SK-N-SH (cell line): ENCODE measurements at regions of chr1 and their contacts with region 1.

Region 1: DNA sequence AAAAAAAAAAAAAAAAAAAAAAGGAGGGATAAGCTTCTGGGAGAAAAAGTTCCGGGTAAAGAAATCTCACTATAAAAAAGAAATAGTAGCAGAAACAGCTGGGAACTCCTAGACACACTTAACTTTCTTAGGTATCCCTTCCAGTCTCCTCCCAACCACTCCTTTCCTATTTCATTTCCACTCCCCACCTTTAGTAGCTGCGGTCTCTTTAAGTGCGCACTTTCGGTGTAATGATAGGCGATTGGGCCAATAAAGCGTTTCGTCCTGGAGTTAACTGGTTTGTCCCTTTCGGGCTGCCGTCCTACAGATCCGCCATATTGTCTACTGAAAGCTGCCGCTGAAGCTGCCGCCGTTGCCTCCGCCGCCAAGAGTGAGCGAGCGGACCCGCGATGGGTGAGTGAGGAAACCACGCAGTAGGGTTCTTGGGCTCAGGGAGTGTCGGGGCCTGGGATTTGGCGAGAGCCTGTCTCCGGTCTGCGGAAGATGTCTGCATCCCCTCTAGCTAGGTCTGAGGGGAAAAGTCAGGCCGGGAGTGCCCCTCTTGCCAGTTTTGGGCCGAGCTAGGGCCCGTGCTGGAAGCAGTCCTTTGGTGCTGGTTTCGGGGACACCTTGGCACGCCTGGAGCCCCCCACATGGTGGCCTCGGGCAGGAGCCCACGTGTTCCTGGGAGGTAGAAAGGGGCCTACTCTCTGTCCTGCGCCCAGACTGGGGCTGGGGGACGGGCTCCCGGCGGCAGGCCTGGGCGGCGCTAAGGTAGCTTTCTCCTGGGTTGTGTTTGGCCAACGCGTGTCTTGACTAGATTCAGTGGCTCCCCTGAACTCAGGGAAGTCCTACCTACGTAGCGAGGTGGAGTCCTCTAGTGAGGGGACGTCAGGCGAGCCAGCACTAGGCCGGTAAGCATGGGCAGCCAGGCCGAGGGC is at the start of gene KPNA6:
- DNase-seq: peak; percentile 82
- H3K4me3 ChIP-seq: peak within 1 kb of the TSS; percentile 79 to 98
- H3K27ac ChIP-seq: peak within 1 kb of the TSS; percentile 83 to 89
- H3K4me1 ChIP-seq: peaks cover 0 to 6% of the 10 kb centered on the region in 2 experiments; a peak in 1 of 4 replicates
- H3K27me3 ChIP-seq: no peaks in the 10 kb centered on the region
- CTCF ChIP-seq: no peak
- EP300 ChIP-seq: peak in 1 of 2 experiments; percentile 26; a peak in 1 of 4 replicates
- RAD21 ChIP-seq: no peak
- polyA plus RNA-seq, gene KPNA6: 13.1 and 18.4 TPM in 2 replicates

Region 2: DNA sequence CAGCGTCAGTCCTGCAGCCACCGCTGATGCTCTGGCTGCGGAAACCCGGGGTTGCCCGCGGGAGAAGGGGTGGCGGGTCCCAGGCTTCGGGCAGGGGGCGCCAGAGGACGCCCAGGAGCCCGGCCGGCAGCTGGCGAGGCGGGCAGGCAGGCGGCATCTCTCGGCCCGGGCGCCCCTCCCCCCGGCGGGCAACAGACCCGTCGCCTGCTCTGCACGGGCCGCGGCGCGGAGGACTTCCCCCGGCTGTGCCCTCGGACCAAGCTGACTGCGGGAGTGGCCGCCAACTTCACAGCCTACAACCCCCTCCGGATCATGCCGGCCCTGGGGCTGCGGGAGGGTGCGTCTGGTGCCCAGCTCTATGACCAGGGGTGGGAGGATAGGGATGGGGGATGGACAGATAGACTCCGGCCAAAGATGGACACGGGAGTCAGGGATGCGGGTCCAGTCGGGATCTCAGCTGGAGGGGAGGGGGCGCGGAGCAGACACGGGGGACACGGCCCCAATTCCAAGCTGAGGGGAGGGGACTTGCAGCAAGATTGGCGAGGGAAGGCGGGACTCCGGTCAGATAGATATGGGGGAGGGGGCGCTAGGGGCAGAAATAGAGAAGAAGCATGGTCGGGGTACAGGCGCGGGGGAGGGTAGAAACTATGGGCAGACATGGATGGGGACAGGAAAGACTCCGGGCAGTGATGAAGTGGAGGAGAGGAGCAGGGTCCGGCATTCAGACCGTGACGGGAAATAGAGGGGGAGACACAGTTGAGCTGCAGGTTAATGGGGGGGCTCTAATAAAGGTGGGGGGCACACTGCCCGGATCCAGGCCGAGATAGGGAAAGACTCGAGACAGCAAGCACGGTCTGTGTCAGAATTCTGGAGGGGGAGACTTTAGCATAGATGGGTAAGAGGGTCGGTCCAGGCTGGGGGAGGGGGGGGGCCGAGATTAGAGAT is 345.0 kb before region 1 on chr1:
- CTCF ChIA-PET with region 1: no interaction called
- POLR2A ChIA-PET with region 1: no interaction called
- DNase-seq: peak; percentile 97
- H3K4me3 ChIP-seq: peak overlapping the region; percentile 74 to 75
- H3K27ac ChIP-seq: peak overlapping the region in 1 of 2 experiments; percentile 85; a peak in 2 of 4 replicates
- H3K4me1 ChIP-seq: peaks cover 27 to 66% of the 10 kb centered on the region in 2 experiments
- H3K27me3 ChIP-seq: no peaks in the 10 kb centered on the region
- CTCF ChIP-seq: peak; percentile 62
- EP300 ChIP-seq: peak in 1 of 2 experiments; percentile 34; a peak in 1 of 4 replicates
- RAD21 ChIP-seq: peak; percentile 75

Region 3: DNA sequence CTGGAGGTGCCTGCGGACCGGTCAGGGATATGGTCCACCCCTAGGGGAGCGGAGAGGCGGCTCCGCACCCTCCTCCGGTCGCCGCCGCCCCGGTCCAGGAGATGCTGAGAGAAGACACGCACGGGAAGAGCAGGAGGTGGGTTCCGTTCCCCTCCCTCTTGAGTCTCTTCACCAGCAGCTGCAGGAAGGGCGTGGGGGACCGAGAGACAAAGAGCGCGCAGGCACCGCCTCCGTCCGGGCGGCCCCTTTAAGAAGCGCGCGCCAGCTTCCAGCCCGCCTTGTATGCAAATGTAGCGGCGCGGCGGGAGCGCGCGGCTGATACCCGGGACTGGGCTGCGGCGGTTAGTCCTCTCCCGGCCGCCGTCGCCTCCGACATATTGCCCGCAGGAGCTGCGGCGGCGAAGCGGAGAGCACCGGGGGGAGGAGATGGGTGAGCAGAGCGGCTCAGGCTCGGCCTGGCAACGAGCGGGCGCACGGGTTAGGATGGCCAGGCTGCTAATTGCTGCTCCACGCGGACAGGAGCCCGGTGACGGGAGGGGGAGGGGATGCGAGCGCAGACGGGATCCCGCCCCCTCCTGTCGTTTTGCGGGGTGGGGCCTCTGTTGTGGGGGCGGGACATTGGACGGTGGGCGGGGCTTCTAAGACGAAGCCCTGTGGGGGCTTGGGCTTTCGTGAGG is 35.2 kb before region 1 on chr1 and contains the start of gene TMEM39B:
- CTCF ChIA-PET with region 1: interaction called, 16 read pairs
- POLR2A ChIA-PET with region 1: interaction called, 11 read pairs
- DNase-seq: peak; percentile 97
- H3K4me3 ChIP-seq: peak within 1 kb of the TSS; percentile 65 to 71
- H3K27ac ChIP-seq: peak within 1 kb of the TSS; percentile 84 to 93
- H3K4me1 ChIP-seq: peaks cover 13 to 27% of the 10 kb centered on the region in 2 experiments
- H3K27me3 ChIP-seq: no peaks in the 10 kb centered on the region
- CTCF ChIP-seq: no peak
- EP300 ChIP-seq: peak in 1 of 2 experiments; percentile 14; a peak in 1 of 4 replicates
- RAD21 ChIP-seq: no peak
- polyA plus RNA-seq, gene TMEM39B: 24.4 and 25.1 TPM in 2 replicates

Region 4: GRCh38 chr1:32122151-32122550 is 14.1 kb after region 1 on chr1:
- CTCF ChIA-PET with region 1: interaction called, 46 read pairs
- POLR2A ChIA-PET with region 1: interaction called, 3 read pairs
- DNase-seq: no peak
- H3K4me3 ChIP-seq: no peak overlapping the region
- H3K27ac ChIP-seq: no peak overlapping the region
- H3K4me1 ChIP-seq: peaks cover 6 to 8% of the 10 kb centered on the region in 2 experiments; a peak in 2 of 4 replicates
- H3K27me3 ChIP-seq: no peaks in the 10 kb centered on the region
- CTCF ChIP-seq: no peak
- EP300 ChIP-seq: no peak
- RAD21 ChIP-seq: no peak

Region 5: GRCh38 chr1:32127409-32128198 is 19.6 kb after region 1 on chr1:
- CTCF ChIA-PET with region 1: interaction called, 46 read pairs
- POLR2A ChIA-PET with region 1: interaction called, 3 read pairs
- DNase-seq: no peak
- H3K4me3 ChIP-seq: no peak overlapping the region
- H3K27ac ChIP-seq: no peak overlapping the region
- H3K4me1 ChIP-seq: peaks cover 0 to 6% of the 10 kb centered on the region in 2 experiments; a peak in 1 of 4 replicates
- H3K27me3 ChIP-seq: no peaks in the 10 kb centered on the region
- CTCF ChIP-seq: peak; percentile 9; the same call in 1 of the 2 replicates
- EP300 ChIP-seq: no peak
- RAD21 ChIP-seq: no peak

Region 6: GRCh38 chr1:32179443-32180185 is 71.6 kb after region 1 on chr1 and contains the start of gene TXLNA:
- CTCF ChIA-PET with region 1: interaction called, 3 read pairs
- POLR2A ChIA-PET with region 1: interaction called, 14 read pairs
- DNase-seq: peak; percentile 98
- H3K4me3 ChIP-seq: peak within 1 kb of the TSS; percentile 65 to 82
- H3K27ac ChIP-seq: peak within 1 kb of the TSS; percentile 90 to 96
- H3K4me1 ChIP-seq: peaks cover 18 to 25% of the 10 kb centered on the region in 2 experiments; a peak in 3 of 4 replicates
- H3K27me3 ChIP-seq: no peaks in the 10 kb centered on the region
- CTCF ChIP-seq: no peak; the same call in 1 of the 2 replicates
- EP300 ChIP-seq: no peak
- RAD21 ChIP-seq: no peak
- polyA plus RNA-seq, gene TXLNA: 26.4 and 32.7 TPM in 2 replicates

Region 7: GRCh38 chr1:32372149-32372756 is 264.3 kb after region 1 on chr1:
- CTCF ChIA-PET with region 1: no interaction called
- POLR2A ChIA-PET with region 1: no interaction called
- DNase-seq: no peak
- H3K4me3 ChIP-seq: no peak overlapping the region
- H3K27ac ChIP-seq: no peak overlapping the region
- H3K4me1 ChIP-seq: no peaks in the 10 kb centered on the region
- H3K27me3 ChIP-seq: no peaks in the 10 kb centered on the region
- CTCF ChIP-seq: no peak
- EP300 ChIP-seq: no peak
- RAD21 ChIP-seq: peak; percentile 31; the same call in 1 of the 2 replicates